Dendritic cell treated with granulocyte-macrophage colony-stimulating factor and Interleukin-4, amounts not matched to agents 40 ng/mL and 50 ng/mL, for 4 days (primary cell): ENCODE measurements at regions of chr5 and their contacts with region 1.

Region 1: DNA sequence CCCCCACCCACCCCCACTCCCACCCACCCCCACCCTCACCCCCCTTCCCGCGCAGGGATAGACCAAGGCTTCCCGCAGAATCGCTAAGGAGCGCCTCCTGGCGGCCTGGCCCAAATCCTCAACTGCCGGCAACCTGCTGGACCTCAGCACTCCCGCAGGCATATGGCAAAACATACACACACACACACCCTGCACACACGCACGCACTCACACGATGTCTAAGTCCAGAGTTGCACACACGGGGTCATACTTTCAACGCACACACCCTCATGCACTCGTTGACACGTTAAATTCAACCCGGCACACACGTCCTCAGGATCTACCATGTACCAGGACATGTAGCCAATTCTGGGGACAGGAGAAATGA is 1.7 kb downstream of the CPLX2 start:
- H3K4me3 Mint-ChIP-seq: no peak overlapping the region
- H3K27ac Mint-ChIP-seq: no peak overlapping the region
- H3K4me1 Mint-ChIP-seq: peaks cover 18% of the 10 kb centered on the region
- H3K27me3 Mint-ChIP-seq: peaks cover 74% of the 10 kb centered on the region

Region 2: GRCh38 chr5:175671013-175671412 is 202.1 kb before region 1 on chr5:
- intact Hi-C with region 1: no loop called
- H3K4me3 Mint-ChIP-seq: no peak overlapping the region
- H3K27ac Mint-ChIP-seq: peak overlapping the region; percentile 21
- H3K4me1 Mint-ChIP-seq: peaks cover 95% of the 10 kb centered on the region
- H3K27me3 Mint-ChIP-seq: no peaks in the 10 kb centered on the region

Region 3: DNA sequence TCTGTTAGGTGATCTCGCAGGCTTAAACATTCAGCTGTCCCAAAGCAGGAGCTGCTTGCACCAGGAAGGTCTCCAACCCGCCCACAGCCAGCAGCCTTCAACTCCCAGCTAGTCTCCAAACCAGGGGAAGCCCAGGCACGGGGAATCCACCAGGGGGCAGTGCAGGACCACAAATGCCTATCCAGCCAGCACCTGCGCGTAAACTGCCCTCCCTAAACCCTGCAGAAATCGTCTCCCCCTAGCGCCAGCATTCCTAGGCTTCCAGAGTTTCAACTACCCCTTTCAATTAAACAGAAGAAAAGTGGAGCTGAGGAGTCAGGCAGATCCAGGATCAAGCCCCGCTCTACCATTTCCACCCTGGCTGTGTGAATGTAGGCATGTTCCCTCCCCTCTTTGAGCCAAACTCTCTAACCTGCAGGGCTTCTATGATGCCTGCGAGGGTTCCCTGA is 143.2 kb before region 1 on chr5:
- intact Hi-C with region 1: loop called (anchors 10 kb)
- H3K4me3 Mint-ChIP-seq: no peak overlapping the region
- H3K27ac Mint-ChIP-seq: no peak overlapping the region
- H3K4me1 Mint-ChIP-seq: peaks cover 6% of the 10 kb centered on the region
- H3K27me3 Mint-ChIP-seq: peaks cover 32% of the 10 kb centered on the region

Region 4: DNA sequence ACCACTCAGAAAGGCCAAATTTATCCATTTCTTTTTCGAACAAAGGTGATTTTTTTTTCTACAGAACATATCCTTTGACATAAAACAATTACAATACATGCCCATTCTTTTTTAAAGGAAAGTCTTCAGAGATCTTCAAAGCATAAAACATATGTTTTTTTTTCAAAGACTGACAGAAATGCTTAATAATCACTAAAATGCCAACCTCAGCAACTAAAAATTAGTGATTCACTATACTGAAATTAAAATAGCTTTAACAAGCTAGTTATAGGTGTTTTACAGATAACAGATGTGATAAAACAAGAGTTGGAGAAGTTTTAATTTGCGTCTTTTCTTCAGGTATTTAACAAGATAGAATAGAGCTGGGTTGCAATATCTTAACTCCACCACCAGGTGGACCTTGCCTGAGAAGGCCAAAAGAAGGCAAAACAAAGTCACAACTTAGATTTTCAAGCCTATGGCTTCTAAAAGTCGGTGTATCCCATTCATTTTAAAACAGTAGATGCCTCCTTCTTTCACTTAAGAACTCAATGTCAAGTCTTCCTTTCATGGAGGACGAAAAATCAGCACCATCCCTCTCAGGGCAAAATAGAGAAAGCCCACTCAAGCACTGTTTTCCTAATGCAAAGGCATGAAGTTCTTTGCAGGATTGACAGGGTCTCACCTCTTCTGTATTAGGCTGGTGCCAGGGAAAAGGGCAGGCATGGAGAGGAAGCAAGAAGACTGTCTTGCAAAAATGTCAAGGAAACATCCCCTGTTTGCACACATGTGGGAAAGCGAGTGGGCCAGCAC is 32.8 kb before region 1 on chr5:
- intact Hi-C with region 1: loop called (anchors 2 kb)
- H3K4me3 Mint-ChIP-seq: no peak overlapping the region
- H3K27ac Mint-ChIP-seq: no peak overlapping the region
- H3K4me1 Mint-ChIP-seq: no peaks in the 10 kb centered on the region
- H3K27me3 Mint-ChIP-seq: peaks cover 23% of the 10 kb centered on the region